ENCODE measurements at regions of chr19 and their contacts with region 1.

Region 1: DNA sequence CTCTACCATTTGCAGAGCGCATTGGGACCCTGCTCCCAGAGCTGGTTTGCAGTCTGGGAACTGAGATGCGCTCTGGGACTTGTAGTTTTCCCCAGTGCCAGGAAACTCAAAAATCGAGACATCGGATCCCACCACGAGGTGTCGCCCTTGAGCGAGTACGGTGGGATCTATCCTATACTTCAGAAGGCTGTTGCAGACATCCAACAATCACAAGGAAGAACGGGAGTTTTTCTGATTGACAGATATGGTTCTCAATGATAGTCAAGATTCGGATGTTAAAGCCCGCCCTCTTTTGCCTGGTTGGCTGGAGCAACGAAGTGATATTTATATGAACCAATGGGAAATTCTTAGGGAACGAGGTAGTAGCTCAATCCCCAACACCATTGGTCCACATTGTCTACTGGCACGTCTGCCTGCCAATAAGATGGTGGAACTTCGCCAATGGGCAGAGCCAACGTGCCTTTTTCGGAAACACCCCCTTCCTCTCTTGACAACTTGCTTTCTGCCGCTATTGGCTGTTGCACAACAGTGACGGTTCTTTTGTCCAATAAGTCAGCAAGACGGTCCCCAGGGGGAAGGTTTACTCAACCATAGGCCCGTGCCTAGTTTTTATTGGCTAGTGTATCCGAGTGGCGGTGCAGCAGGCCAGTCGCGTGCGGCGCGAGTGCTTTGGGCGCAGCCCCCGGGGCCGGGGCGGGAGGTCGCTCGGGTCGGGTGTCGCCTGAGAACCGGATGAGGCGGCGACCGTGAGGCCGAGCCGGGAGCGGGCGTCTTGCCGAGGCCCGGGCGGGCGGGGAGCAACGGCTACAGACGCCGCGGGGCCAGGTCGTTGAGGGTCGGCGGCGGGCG is at the start of gene DNM2:
- DNase-seq: peak; percentile 100
- H3K27ac ChIP-seq: peak within 1 kb of the TSS; percentile 90
- CTCF ChIP-seq: peak; percentile 85

Region 2: GRCh38 chr19:10864538-10864899 is 146.9 kb after region 1 on chr19:
- CTCF ChIA-PET with region 1: interaction called, 11 read pairs
- POLR2A ChIA-PET with region 1: no interaction called
- DNase-seq: peak; percentile 92
- H3K27ac ChIP-seq: peak overlapping the region; percentile 45
- CTCF ChIP-seq: peak; percentile 93